Left ventricle myocardium inferior (tissue), 1 donor: ENCODE measurements at regions of chr16 and their contacts with region 1.

Region 1: DNA sequence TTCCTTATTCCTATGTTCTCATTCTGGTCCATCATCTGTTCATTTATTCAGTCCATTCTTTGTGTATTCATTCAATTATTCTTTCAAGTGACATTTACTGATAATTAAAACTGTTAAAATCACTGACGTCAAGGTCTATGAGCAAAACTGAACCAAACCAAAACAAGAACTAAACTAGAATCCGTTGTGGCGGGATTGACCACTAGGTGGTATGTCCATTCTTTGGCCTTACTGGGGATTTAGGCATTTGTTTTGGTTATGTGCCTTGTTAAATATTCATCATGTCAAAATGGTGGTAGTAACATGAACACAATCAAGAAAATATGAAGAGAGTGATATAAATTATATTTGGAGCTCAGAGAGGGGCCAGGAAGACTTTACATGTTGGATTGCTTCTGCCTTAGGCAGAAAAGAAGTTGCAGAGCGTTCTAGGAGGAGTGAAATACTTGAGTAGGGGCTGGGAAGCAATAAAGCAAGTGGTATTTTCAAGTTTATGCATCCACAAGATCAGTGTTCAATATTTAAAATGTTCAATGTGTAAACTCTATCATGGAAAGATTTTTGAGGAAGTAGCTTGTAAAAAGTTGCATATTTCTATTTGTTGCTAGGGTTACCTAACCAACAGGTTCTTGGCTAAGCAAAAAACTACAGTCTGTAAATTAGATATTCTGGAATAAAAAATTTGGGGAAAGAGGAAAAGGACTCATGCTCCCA is 129.0 kb downstream of the CDH13 start:
- DNase-seq: no peak
- H3K4me3 ChIP-seq: no peak overlapping the region
- H3K27ac ChIP-seq: peak overlapping the region; percentile 59
- H3K4me1 ChIP-seq: peaks cover 65% of the 10 kb centered on the region
- H3K27me3 ChIP-seq: no peaks in the 10 kb centered on the region
- CTCF ChIP-seq: no peak

Region 2: GRCh38 chr16:82639666-82640336 is 115.9 kb before region 1 on chr16:
- intact Hi-C with region 1: loop called (anchors 10 kb)
- DNase-seq: peak; percentile 57
- H3K4me3 ChIP-seq: no peak overlapping the region
- H3K27ac ChIP-seq: peak overlapping the region; percentile 16
- H3K4me1 ChIP-seq: peaks cover 90% of the 10 kb centered on the region
- H3K27me3 ChIP-seq: no peaks in the 10 kb centered on the region
- CTCF ChIP-seq: peak; percentile 81

Region 3: DNA sequence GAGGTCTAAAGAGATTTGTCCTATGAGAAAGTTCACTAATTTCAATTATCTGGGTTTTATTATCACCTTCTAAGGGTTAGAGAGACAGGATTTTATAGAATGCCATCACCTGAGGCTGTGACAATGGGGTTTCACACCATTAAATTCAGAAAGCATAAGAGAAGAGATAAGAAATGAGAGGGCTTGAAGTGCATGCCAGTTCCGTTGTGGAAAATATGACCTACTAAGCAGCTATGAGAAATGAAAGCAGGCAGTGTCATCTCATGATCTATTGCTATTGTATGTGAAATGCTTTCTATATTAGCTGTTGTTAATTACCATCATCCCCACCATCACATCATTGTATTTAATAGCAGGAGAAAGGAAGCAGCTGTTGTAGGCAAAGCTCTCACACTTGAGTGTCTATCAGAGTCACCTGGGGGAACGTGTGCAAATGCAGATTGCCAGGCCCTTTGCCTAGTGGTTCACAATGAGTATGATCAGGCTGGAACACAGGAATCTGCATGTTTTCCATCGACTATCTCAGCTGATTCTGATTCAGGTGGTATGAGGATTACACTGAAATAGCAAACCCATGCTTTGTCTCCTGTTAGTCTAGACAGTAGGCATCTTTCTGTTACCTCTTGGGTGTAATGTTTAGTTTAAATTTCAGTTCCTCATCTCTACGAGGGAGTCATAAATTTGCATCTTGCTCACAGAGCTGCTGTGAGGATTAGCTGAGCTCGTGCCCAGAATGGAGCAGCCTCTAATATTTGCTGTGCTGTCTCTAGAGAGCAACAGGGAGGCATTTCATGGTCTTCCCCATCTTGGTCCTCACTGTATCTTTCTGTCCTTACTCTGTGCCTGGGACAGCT is 127.5 kb after region 1 on chr16:
- intact Hi-C with region 1: no loop called
- DNase-seq: no peak
- H3K4me3 ChIP-seq: no peak overlapping the region
- H3K27ac ChIP-seq: no peak overlapping the region
- H3K4me1 ChIP-seq: peaks cover 17% of the 10 kb centered on the region
- H3K27me3 ChIP-seq: no peaks in the 10 kb centered on the region
- CTCF ChIP-seq: no peak